ENCODE measurements at regions of chr16 and their contacts with region 1.

Region 1: DNA sequence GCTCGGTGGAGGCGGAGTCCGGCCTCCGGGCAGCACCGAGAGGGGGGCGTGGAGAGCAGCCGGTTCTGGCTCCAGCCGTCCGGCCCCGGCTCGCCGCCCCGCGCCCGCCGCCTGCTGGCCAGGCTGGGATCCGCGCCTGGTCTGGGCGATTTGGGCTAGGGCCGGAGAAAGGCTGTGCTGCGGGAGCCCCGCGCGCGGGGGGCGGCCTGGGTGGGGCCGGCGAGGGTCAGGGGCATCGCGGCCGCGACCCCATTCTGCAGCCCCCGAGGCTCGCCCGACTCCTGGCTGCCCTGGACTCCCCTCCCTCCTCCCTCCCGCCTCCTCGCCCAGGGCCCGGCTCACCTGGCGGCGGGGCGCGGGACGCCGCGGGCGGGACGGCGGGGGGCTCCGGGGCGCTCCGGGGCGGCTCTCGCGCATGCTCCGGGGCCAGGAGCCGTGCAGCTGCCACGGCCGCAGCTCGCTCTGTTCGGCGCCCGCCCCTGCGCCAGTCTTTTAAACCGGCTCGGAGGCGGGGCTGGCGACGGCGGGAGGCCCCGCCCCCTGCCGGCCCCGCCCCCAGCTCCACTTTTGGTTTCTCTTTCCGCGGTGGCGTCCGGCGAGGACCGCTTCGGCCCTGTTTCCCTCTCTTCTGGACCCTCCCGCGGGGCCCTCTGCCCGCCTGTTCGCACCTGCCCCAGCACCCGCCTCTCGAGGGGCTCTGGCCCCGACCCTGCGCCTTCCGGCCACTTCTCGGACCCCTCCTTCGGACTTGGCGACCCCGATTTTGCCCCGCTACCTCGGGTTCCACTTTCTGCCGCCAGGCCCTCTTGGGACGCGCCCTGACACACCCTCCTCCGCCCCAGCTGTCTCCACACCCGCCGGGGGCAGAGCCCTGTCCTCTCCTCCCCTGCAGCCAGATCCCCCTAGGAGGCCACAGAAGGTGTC is at the start of gene SOCS1:
- DNase-seq: peak; percentile 98
- ATAC-seq: peak; percentile 68
- H3K4me3 Mint-ChIP-seq: peak within 1 kb of the TSS; percentile 98
- H3K27ac Mint-ChIP-seq: peak within 1 kb of the TSS; percentile 98
- H3K4me1 Mint-ChIP-seq: peaks cover 47% of the 10 kb centered on the region
- H3K27me3 Mint-ChIP-seq: no peaks in the 10 kb centered on the region
- total RNA-seq, gene SOCS1: 165 to 176 TPM

Region 2: GRCh38 chr16:10981697-10982216 is 274.2 kb before region 1 on chr16:
- POLR2A ChIA-PET with region 1: interaction called, 23 read pairs
- DNase-seq: peak; percentile 62
- ATAC-seq: peak; percentile 96
- H3K4me3 Mint-ChIP-seq: no peak overlapping the region
- H3K27ac Mint-ChIP-seq: peak overlapping the region; percentile 38
- H3K4me1 Mint-ChIP-seq: peaks cover 59% of the 10 kb centered on the region
- H3K27me3 Mint-ChIP-seq: no peaks in the 10 kb centered on the region

Region 3: DNA sequence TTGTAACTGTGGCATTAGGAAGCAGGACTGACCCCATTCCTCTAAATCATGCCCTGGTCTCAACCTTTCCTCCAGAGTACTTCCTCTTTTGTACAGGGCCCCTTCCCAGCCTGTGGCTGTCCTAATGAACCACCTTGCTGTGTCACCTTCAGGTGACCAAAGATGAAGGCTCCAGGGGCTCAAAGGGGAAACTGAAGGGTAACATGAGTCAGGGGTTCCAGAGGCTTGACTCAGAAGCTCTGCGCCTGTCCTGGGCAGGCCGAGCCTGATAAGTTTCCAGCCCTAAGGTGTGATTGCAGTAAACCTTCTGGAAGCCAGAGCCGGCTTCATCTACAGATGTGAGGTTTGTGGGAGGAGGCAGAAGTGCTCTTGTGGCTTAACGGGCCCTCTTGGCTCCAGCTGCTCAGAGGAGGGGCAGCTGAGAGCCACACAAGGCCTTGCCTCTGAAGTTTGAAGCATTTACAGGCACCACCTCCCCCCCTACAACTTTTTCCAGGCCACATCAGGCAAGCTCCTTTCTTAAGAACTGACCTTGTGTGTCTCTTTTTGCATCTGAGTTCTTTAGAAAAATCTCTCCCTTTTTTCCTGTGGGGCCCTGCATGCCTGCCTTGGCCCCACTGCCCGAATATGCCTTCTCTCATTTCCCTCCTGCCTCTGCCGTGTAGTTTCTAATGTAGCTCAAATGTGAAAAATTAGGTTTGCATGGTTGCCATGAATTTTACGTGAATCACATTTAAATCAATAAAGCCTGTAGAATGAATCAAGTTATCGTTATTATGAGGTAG is 161.7 kb before region 1 on chr16:
- POLR2A ChIA-PET with region 1: interaction called, 42 read pairs
- DNase-seq: peak; percentile 67
- ATAC-seq: peak; percentile 84
- H3K4me3 Mint-ChIP-seq: peak overlapping the region; percentile 61
- H3K27ac Mint-ChIP-seq: peak overlapping the region; percentile 94
- H3K4me1 Mint-ChIP-seq: peaks cover 60% of the 10 kb centered on the region
- H3K27me3 Mint-ChIP-seq: no peaks in the 10 kb centered on the region

Region 4: DNA sequence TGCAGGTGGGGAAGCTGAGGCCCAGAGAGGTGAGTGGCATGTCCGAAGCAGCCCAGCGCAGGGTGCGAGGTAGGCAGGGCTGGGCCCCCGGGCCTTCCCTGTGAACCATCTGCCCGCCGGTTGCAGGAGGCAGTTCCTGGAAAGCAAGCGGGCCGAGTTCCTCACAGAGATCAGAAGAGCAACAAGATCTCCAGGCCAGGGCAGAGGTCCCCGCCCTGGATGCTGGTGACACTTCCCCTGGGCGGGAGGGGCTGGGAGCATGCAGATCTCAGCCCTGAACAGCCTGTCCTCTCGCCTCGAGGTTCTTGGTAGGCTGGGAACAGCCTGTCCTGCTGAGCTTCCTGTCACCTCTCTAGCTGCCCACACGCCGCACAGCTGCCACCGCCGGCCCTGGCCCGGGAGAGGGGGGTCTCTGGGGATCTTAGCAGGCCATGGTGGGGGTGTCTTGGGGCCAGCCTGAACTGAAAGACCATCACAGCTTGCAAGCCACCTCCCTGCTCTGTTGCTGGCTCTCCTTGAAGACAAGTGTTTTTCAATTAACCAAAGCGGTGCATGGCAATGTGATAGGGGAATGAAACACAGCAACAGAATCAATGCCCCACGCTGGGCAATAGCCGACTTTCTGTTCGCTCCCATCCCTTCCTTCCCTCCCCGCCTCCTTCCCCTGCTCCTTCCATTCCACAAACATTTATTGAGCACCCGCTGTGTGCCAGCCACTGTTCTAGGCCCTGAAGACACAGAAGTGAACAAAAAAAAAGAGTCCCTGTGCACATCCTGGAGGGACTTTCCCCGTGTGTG is 31.7 kb before region 1 on chr16:
- POLR2A ChIA-PET with region 1: interaction called, 227 read pairs
- DNase-seq: peak; percentile 80
- ATAC-seq: peak; percentile 78
- H3K4me3 Mint-ChIP-seq: peak overlapping the region; percentile 74
- H3K27ac Mint-ChIP-seq: peak overlapping the region; percentile 100
- H3K4me1 Mint-ChIP-seq: peaks cover 60% of the 10 kb centered on the region
- H3K27me3 Mint-ChIP-seq: no peaks in the 10 kb centered on the region

Region 5: GRCh38 chr16:11328172-11329070 is 72.4 kb after region 1 on chr16:
- POLR2A ChIA-PET with region 1: interaction called, 40 read pairs
- DNase-seq: no peak
- ATAC-seq: peak; percentile 85
- H3K4me3 Mint-ChIP-seq: peak overlapping the region; percentile 83
- H3K27ac Mint-ChIP-seq: peak overlapping the region; percentile 89
- H3K4me1 Mint-ChIP-seq: peaks cover 65% of the 10 kb centered on the region
- H3K27me3 Mint-ChIP-seq: no peaks in the 10 kb centered on the region

Region 6: GRCh38 chr16:11389631-11390212 is 133.7 kb after region 1 on chr16:
- POLR2A ChIA-PET with region 1: interaction called, 11 read pairs
- DNase-seq: no peak
- ATAC-seq: no peak
- H3K4me3 Mint-ChIP-seq: no peak overlapping the region
- H3K27ac Mint-ChIP-seq: no peak overlapping the region
- H3K4me1 Mint-ChIP-seq: peaks cover 11% of the 10 kb centered on the region
- H3K27me3 Mint-ChIP-seq: no peaks in the 10 kb centered on the region

Region 7: DNA sequence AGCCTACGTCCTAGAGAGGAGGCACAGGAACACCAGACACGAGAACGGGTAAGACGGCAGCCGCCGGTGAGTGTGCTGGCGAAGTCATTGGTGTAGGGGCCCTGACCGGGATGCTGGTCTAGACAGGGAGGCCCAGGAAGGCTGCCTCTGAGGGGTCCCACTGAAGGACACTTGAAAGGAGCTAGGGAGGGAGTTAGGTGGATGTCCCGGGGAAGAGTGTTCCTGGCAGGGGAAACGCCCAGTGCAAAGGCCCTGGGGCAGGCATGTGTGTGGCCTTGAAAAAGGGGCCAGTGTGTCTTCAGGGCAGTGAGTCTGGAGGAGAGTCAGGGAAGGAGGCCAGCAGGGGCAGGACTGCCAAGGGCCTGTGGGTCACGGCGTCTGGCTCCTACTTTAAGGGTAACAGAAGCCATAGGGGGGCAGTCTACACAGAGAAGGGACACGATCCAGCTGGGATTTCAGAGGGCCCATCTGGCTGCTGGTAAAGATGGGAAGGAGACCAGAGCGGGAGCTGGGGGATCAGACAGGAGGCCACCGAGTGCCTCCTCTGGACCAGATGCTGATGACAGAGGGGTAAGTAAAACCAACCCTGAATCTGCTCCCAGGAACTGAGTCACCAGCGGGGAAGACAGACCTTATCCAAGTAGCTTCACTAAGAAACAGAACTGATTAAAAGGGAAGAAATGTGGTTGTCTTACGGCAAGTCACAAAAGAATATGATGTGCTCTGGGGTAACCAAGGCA is 214.8 kb after region 1 on chr16:
- POLR2A ChIA-PET with region 1: no interaction called
- DNase-seq: no peak
- ATAC-seq: no peak
- H3K4me3 Mint-ChIP-seq: no peak overlapping the region
- H3K27ac Mint-ChIP-seq: no peak overlapping the region
- H3K4me1 Mint-ChIP-seq: no peaks in the 10 kb centered on the region
- H3K27me3 Mint-ChIP-seq: no peaks in the 10 kb centered on the region

Region 8: GRCh38 chr16:11481987-11482386 is 226.0 kb after region 1 on chr16:
- POLR2A ChIA-PET with region 1: no interaction called
- DNase-seq: no peak
- ATAC-seq: no peak
- H3K4me3 Mint-ChIP-seq: no peak overlapping the region
- H3K27ac Mint-ChIP-seq: no peak overlapping the region
- H3K4me1 Mint-ChIP-seq: no peaks in the 10 kb centered on the region
- H3K27me3 Mint-ChIP-seq: no peaks in the 10 kb centered on the region

Measured in activated naive CD8-positive, alpha-beta T cell treated with anti-CD3 and anti-CD28 coated beads, Interleukin-2, amount 10 ng/mL, durations not matched to agents 7 days and 5 days (primary cell).